A673 (cell line): ENCODE measurements at regions of chr1 and their contacts with region 1.

Region 1: GRCh38 chr1:244841273-244841927 is 5.9 kb downstream of the COX20 start:
- DNase-seq: no peak
- H3K4me3 ChIP-seq: no peak overlapping the region
- H3K27ac ChIP-seq: peak overlapping the region; percentile 23
- H3K4me1 ChIP-seq: peaks cover 15% of the 10 kb centered on the region
- H3K27me3 ChIP-seq: no peaks in the 10 kb centered on the region
- CTCF ChIP-seq: no peak

Region 2: GRCh38 chr1:244778361-244778760 is 63.0 kb before region 1 on chr1:
- CTCF ChIA-PET with region 1: no interaction called
- POLR2A ChIA-PET with region 1: no interaction called
- intact Hi-C with region 1: no loop called
- DNase-seq: peak; percentile 53
- H3K4me3 ChIP-seq: no peak overlapping the region
- H3K27ac ChIP-seq: no peak overlapping the region
- H3K4me1 ChIP-seq: no peaks in the 10 kb centered on the region
- H3K27me3 ChIP-seq: no peaks in the 10 kb centered on the region
- CTCF ChIP-seq: no peak

Region 3: GRCh38 chr1:244857761-244858160 is 16.4 kb after region 1 on chr1:
- CTCF ChIA-PET with region 1: no interaction called
- POLR2A ChIA-PET with region 1: interaction called, 13 read pairs
- intact Hi-C with region 1: no loop called
- DNase-seq: no peak
- H3K4me3 ChIP-seq: no peak overlapping the region
- H3K27ac ChIP-seq: no peak overlapping the region
- H3K4me1 ChIP-seq: peaks cover 23% of the 10 kb centered on the region
- H3K27me3 ChIP-seq: no peaks in the 10 kb centered on the region
- CTCF ChIP-seq: no peak